ENCODE measurements at regions of chr11 and their contacts with region 1.

Region 1: GRCh38 chr11:122601141-122602125 is 54.1 kb upstream of the UBASH3B start:
- DNase-seq: no peak
- H3K4me3 ChIP-seq: no peak overlapping the region
- H3K27ac ChIP-seq: no peak overlapping the region
- H3K4me1 ChIP-seq: no peaks in the 10 kb centered on the region
- CTCF ChIP-seq: no peak

Region 2: GRCh38 chr11:122538060-122538459 is 63.4 kb before region 1 on chr11:
- CTCF ChIA-PET with region 1: interaction called, 10 read pairs
- POLR2A ChIA-PET with region 1: no interaction called
- intact Hi-C with region 1: no loop called
- DNase-seq: no peak
- H3K4me3 ChIP-seq: no peak overlapping the region
- H3K27ac ChIP-seq: no peak overlapping the region
- H3K4me1 ChIP-seq: no peaks in the 10 kb centered on the region
- CTCF ChIP-seq: no peak

Measured in OCI-LY7 (cell line).